ENCODE measurements at regions of chr1 and their contacts with region 1.

Region 1: GRCh38 chr1:211514030-211514754 is 22.2 kb upstream of the RD3 start:
- DNase-seq: peak; percentile 82 to 89 (median 88)
- H3K4me3 ChIP-seq: peak overlapping the region in 4 of 7 experiments; percentile 23 to 65 (median 28)
- H3K27ac ChIP-seq: no peak overlapping the region
- H3K4me1 ChIP-seq: peaks cover 2 to 37% (median 30%) of the 10 kb centered on the region in 4 experiments
- H3K27me3 ChIP-seq: no peaks in the 10 kb centered on the region

Region 2: DNA sequence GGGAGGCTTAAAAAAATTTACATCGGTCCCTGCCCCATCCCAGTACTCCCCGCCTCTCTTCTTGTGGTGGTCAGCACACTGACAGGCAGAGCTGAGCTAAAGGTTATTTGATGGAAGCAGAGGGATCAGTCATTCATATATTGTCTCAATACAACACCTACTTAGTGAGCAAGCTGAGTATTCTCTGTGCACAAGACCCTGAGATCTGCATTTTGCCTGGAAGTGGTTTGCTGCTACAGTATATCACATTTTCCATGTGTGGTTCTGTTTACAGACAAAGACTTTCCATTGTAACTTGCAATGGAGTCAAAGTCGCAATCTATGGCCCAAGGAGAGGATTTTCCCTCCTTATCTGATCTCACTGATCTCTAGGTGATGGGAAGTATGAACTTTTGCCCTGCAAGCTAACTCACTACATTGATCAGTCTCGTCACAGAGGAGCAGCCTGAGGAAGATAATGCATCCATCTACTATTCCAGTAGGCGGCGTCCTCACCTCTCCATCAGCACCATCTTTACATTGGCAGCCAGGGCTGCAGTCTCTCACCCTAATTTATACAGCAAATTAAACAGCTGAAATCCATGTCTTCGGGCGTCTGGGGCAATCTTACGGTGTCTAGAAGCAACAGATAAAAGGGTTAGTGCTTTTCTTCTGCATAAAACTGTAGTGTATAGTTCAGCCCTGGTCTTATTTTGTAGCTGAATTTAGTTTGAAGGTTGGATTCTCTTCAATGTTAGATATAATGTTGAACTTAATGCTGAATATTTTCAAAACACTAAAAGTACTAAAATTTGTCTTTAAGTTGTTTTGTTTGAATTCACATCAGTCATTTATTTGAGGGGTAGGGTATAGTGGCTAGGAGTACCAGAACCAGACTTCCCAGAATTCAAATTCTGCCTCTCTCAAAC is 190.8 kb before region 1 on chr1:
- CTCF ChIA-PET with region 1: interaction called, 111 read pairs
- POLR2A ChIA-PET with region 1: no interaction called
- DNase-seq: peak; percentile 72 to 84 (median 84)
- H3K4me3 ChIP-seq: no peak overlapping the region
- H3K27ac ChIP-seq: no peak overlapping the region
- H3K4me1 ChIP-seq: peaks cover 8 to 38% (median 25%) of the 10 kb centered on the region in 4 experiments
- H3K27me3 ChIP-seq: no peaks in the 10 kb centered on the region

Region 3: DNA sequence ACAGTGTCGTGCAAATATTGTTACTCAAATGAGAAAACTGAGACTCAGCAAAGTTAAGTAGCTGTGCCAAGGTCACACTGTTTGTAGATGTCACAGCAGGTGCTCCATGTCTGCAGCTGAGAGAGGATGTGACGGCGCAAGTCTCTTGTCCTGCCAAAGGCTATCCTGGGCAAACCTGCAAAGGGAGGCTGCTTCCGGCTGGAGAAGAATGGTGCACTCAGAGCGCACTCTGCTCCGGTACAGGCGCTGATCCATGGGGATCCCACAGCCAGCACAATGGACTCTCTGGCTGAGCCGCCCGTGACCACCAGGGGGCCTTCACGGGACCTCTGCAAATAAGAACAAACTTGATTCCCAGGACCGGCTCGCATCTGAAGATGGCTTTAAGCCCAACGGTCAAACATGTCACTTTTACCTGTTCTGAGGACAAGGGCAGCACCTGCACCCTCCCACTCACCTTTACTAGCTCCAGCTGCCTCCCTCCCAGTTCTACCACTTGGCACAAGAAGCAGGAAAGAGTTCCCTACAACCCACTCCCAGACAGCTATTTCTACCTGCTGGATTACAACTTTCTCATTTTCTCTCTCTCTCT is 44.2 kb before region 1 on chr1:
- CTCF ChIA-PET with region 1: interaction called, 41 read pairs
- POLR2A ChIA-PET with region 1: interaction called, 3 read pairs
- DNase-seq: peak; percentile 37 to 44 (median 41)
- H3K4me3 ChIP-seq: no peak overlapping the region
- H3K27ac ChIP-seq: no peak overlapping the region
- H3K4me1 ChIP-seq: peaks cover 5 to 32% (median 22%) of the 10 kb centered on the region in 4 experiments
- H3K27me3 ChIP-seq: no peaks in the 10 kb centered on the region

Region 4: GRCh38 chr1:211492511-211493132 is 21.6 kb before region 1 on chr1:
- CTCF ChIA-PET with region 1: interaction called, 33 read pairs
- POLR2A ChIA-PET with region 1: no interaction called
- DNase-seq: peak in 2 of 3 donors; percentile 72 to 84
- H3K4me3 ChIP-seq: no peak overlapping the region
- H3K27ac ChIP-seq: no peak overlapping the region
- H3K4me1 ChIP-seq: peaks cover 0 to 18% (median 14%) of the 10 kb centered on the region in 4 experiments
- H3K27me3 ChIP-seq: no peaks in the 10 kb centered on the region

Region 5: GRCh38 chr1:211529453-211529852 is 15.3 kb after region 1 on chr1:
- CTCF ChIA-PET with region 1: interaction called, 12 read pairs
- POLR2A ChIA-PET with region 1: interaction called, 3 read pairs
- DNase-seq: no peak
- H3K4me3 ChIP-seq: no peak overlapping the region
- H3K27ac ChIP-seq: no peak overlapping the region
- H3K4me1 ChIP-seq: peaks cover 0 to 37% (median 23%) of the 10 kb centered on the region in 4 experiments
- H3K27me3 ChIP-seq: no peaks in the 10 kb centered on the region

Region 6: DNA sequence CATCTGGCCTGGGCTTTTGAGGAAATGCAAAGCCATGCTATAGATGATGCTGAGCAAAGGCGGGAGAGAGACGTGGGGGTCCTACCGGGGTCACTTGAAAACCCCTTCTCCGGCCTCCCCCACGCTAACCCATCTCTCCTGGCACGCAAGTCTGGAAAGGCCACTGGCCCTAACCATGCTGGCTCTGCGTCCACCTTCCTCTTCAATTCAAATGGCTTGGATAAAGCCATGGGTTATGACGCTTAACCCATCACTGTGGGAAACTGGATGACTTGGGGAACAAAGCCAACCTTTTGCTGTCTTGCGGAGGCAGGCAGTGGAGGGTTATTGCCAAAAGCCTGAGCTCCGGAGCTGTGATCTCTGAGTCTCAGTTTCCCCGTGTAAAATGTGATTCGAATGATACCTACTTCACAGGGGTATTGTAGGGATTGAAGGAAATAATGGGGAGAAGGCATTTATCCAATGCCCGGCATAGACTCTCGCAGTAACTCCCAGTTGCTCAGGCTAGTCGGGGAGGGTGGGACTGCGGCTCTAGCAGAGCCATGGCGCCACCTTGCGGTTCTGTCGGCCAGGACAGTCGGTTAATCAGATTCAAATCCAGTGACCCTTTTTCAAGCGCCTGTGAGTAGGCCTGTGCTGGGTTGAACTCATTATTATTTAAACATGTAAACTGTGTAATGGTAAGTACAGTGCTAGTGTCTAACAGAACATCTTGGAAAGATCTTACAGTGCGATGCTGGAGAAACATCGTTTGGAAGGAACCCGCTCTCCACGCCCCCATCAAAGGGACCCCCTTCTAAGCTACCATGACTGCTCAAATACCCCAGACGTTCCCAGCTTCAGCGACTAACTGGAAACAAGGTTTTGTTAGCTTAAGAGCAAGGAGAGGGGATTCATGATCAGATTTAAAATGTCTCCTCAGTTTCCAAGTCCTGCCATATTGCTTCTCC is 140.9 kb after region 1 on chr1:
- CTCF ChIA-PET with region 1: interaction called, 42 read pairs
- POLR2A ChIA-PET with region 1: no interaction called
- DNase-seq: peak; percentile 83 to 90 (median 83)
- H3K4me3 ChIP-seq: no peak overlapping the region
- H3K27ac ChIP-seq: no peak overlapping the region
- H3K4me1 ChIP-seq: no peaks in the 10 kb centered on the region
- H3K27me3 ChIP-seq: peaks cover 0 to 3% (median 0%) of the 10 kb centered on the region in 5 experiments

Region 7: DNA sequence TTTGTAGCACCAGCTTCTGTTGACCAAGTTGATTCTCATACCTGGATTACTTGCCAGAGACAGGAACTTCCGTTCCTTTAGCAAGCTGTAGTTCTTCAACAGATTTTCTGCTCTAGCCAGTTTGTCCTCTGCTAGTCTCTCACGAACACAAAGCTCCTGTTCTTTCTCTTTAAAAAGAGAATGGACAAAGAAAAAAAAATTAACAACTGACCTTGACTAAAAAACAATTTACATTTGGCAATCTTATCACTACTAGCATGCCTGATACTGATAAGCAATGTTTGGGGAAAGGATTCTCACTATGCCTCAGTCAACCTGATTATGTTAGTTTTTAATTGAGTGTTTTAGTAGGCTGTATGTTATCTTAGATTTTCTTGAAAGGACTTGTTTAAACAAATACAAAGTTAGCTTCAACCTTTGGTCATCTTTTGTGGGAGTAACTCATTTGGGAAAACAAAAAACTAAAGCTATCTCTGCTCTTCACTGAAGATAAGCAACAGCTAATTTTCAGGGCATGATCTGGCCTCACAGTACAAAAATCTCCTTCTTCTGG is 152.9 kb after region 1 on chr1:
- CTCF ChIA-PET with region 1: no interaction called
- POLR2A ChIA-PET with region 1: no interaction called
- DNase-seq: no peak
- H3K4me3 ChIP-seq: no peak overlapping the region
- H3K27ac ChIP-seq: no peak overlapping the region
- H3K4me1 ChIP-seq: no peaks in the 10 kb centered on the region
- H3K27me3 ChIP-seq: no peaks in the 10 kb centered on the region

Measured in common myeloid progenitor, CD34-positive (primary cell).